ENCODE measurements at regions of chr12 and their contacts with region 1.

Region 1: GRCh38 chr12:5003020-5003666 is 40.5 kb upstream of the KCNA5 start:
- DNase-seq: peak; percentile 60 to 66
- ATAC-seq: peak; percentile 36 to 95 (median 91)
- H3K4me3 ChIP-seq: no peak overlapping the region
- H3K27ac ChIP-seq: no peak overlapping the region
- H3K4me1 ChIP-seq: peaks cover 0 to 4% (median 2%) of the 10 kb centered on the region in 9 donors
- H3K27me3 ChIP-seq: peaks cover 0 to 23% (median 4%) of the 10 kb centered on the region in 7 donors
- CTCF ChIP-seq: peak; percentile 72 to 93 (median 89)

Region 2: GRCh38 chr12:4857472-4858291 is 145.5 kb before region 1 on chr12:
- intact Hi-C with region 1: loop called (anchors 1 to 5 kb)
- DNase-seq: peak; percentile 65 to 67
- ATAC-seq: peak; percentile 73 to 91 (median 84)
- H3K4me3 ChIP-seq: peak overlapping the region in 6 of 10 donors; percentile 9 to 33 (median 30)
- H3K27ac ChIP-seq: peak overlapping the region in 1 of 10 donors; percentile 8
- H3K4me1 ChIP-seq: peaks cover 2 to 34% (median 19%) of the 10 kb centered on the region in 9 donors
- H3K27me3 ChIP-seq: peaks cover 0 to 15% (median 9%) of the 10 kb centered on the region in 7 donors
- CTCF ChIP-seq: peak; percentile 76 to 91 (median 86)

Region 3: GRCh38 chr12:4943067-4943937 is 59.8 kb before region 1 on chr12:
- intact Hi-C with region 1: loop called in 1 of 10 experiments (anchors 2 kb)
- DNase-seq: no peak
- ATAC-seq: no peak
- H3K4me3 ChIP-seq: no peak overlapping the region
- H3K27ac ChIP-seq: no peak overlapping the region
- H3K4me1 ChIP-seq: no peaks in the 10 kb centered on the region
- H3K27me3 ChIP-seq: peaks cover 0 to 35% (median 13%) of the 10 kb centered on the region in 7 donors
- CTCF ChIP-seq: no peak

Measured in heart right ventricle (tissue), 16 donors.